ENCODE measurements at regions of chr15 and their contacts with region 1.

Region 1: GRCh38 chr15:64460206-64460734 is at the start of gene ZNF609:
- DNase-seq: peak; percentile 81 to 91 (median 85)
- ATAC-seq: peak; percentile 79
- H3K4me3 ChIP-seq: peak within 1 kb of the TSS; percentile 62 to 70
- H3K4me3 Mint-ChIP-seq: peak within 1 kb of the TSS; percentile 92
- H3K27ac ChIP-seq: peak within 1 kb of the TSS; percentile 32 to 69
- H3K27ac Mint-ChIP-seq: peak within 1 kb of the TSS; percentile 89
- H3K4me1 ChIP-seq: peaks cover 84% of the 10 kb centered on the region
- H3K4me1 Mint-ChIP-seq: peaks cover 84% of the 10 kb centered on the region
- H3K27me3 ChIP-seq: no peaks in the 10 kb centered on the region
- H3K27me3 Mint-ChIP-seq: no peaks in the 10 kb centered on the region
- CTCF ChIP-seq: no peak
- total RNA-seq, gene ZNF609: 40.1 to 40.7 TPM

Region 2: GRCh38 chr15:63600616-63601025 is 859.6 kb before region 1 on chr15:
- CTCF ChIA-PET with region 1: no interaction called
- POLR2A ChIA-PET with region 1: no interaction called
- intact Hi-C with region 1: loop called in 1 of 2 experiments (anchors 5 kb)
- DNase-seq: peak; percentile 79 to 98 (median 90)
- ATAC-seq: peak; percentile 80
- H3K4me3 ChIP-seq: peak overlapping the region; percentile 87 to 96
- H3K4me3 Mint-ChIP-seq: peak overlapping the region; percentile 94
- H3K27ac ChIP-seq: peak overlapping the region; percentile 75 to 87
- H3K27ac Mint-ChIP-seq: peak overlapping the region; percentile 94
- H3K4me1 ChIP-seq: peaks cover 29% of the 10 kb centered on the region
- H3K4me1 Mint-ChIP-seq: peaks cover 56% of the 10 kb centered on the region
- H3K27me3 ChIP-seq: no peaks in the 10 kb centered on the region
- H3K27me3 Mint-ChIP-seq: no peaks in the 10 kb centered on the region
- CTCF ChIP-seq: no peak

Region 3: DNA sequence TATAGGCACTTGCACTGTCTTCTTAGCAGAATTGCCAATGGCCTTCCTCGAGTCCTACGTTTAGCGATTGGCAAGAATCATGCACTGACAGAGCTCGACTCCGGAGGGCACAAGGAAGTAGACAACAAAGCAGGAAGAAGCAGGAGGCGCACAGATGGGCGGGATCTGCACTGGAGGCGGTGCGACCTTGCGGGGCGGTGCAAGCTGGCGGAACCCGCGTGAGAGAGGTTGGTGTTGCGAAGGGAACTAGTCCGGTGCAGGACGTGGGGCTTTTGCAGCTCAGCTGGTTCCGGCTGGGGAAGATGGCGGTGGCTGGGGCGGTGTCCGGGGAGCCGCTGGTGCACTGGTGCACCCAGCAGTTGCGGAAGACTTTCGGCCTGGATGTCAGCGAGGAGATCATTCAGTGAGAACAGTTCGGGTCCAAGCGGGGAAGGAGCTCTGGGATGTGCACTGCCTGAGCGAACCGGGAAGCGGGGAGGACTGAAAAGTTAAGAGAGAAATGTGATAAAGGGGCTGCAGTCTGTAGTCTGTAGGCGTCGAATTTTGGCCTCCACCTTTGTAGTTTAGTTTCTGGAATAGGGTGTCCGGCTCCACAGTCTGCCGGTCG is 72.6 kb before region 1 on chr15 and contains the start of gene TRIP4:
- CTCF ChIA-PET with region 1: no interaction called
- POLR2A ChIA-PET with region 1: no interaction called
- intact Hi-C with region 1: loop called in 1 of 2 experiments (anchors 2 kb)
- DNase-seq: peak; percentile 93 to 98 (median 96)
- ATAC-seq: peak; percentile 99
- H3K4me3 ChIP-seq: peak within 1 kb of the TSS; percentile 86 to 98
- H3K4me3 Mint-ChIP-seq: peak within 1 kb of the TSS; percentile 99
- H3K27ac ChIP-seq: peak within 1 kb of the TSS; percentile 51 to 69
- H3K27ac Mint-ChIP-seq: peak within 1 kb of the TSS; percentile 97
- H3K4me1 ChIP-seq: peaks cover 19% of the 10 kb centered on the region
- H3K4me1 Mint-ChIP-seq: peaks cover 21% of the 10 kb centered on the region
- H3K27me3 ChIP-seq: no peaks in the 10 kb centered on the region
- H3K27me3 Mint-ChIP-seq: no peaks in the 10 kb centered on the region
- CTCF ChIP-seq: no peak
- total RNA-seq, gene TRIP4: 10.7 to 11.2 TPM

Region 4: DNA sequence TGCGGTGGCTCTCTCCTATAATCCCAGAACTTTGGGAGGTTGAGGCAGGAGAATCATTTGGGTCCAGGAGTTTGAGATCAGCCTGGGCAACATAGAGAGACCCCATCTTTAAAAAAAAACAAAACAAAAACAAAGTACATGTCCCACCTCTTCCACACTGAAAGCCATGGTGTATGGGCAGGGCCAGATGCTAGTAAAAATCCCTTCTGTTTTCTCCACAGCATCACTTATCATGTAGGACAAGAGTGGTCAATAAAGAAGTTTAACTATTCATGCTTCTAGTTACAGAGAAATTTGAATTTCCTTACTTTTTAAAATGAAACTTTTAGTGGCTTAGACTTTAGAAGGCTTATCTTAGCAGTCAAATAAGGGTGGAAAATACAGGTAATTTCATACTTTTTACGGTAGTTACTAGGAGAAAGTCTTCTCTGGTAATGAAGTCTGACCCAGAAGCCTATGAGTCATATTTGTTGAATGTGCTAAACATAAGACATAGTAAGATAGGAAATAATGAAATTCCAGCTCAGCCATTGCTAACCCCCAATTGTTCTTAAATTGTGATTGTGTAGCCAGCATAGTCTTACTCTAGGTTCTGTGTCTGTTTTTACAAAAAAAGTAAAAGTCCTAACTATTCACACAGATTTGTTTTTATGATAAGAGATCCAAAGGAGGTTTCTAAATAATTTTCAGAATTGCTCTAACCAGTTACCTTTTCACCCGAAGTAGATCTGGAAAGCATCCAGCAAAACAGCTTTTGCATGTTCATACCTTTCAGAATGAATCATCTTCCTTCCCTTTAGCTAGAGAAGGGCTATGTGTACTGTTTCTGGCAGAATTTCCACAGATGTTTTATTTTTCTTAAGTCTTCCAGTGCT is 16.3 kb before region 1 on chr15:
- CTCF ChIA-PET with region 1: interaction called, 5 read pairs
- POLR2A ChIA-PET with region 1: interaction called, 4 read pairs
- intact Hi-C with region 1: loop called in 1 of 2 experiments (anchors 2 kb)
- DNase-seq: peak in 1 of 9 experiments; percentile 36
- ATAC-seq: peak; percentile 38
- H3K4me3 ChIP-seq: no peak overlapping the region
- H3K4me3 Mint-ChIP-seq: peak overlapping the region; percentile 45
- H3K27ac ChIP-seq: no peak overlapping the region
- H3K27ac Mint-ChIP-seq: peak overlapping the region; percentile 84
- H3K4me1 ChIP-seq: peaks cover 38% of the 10 kb centered on the region
- H3K4me1 Mint-ChIP-seq: peaks cover 49% of the 10 kb centered on the region
- H3K27me3 ChIP-seq: no peaks in the 10 kb centered on the region
- H3K27me3 Mint-ChIP-seq: no peaks in the 10 kb centered on the region
- CTCF ChIP-seq: no peak

Region 5: DNA sequence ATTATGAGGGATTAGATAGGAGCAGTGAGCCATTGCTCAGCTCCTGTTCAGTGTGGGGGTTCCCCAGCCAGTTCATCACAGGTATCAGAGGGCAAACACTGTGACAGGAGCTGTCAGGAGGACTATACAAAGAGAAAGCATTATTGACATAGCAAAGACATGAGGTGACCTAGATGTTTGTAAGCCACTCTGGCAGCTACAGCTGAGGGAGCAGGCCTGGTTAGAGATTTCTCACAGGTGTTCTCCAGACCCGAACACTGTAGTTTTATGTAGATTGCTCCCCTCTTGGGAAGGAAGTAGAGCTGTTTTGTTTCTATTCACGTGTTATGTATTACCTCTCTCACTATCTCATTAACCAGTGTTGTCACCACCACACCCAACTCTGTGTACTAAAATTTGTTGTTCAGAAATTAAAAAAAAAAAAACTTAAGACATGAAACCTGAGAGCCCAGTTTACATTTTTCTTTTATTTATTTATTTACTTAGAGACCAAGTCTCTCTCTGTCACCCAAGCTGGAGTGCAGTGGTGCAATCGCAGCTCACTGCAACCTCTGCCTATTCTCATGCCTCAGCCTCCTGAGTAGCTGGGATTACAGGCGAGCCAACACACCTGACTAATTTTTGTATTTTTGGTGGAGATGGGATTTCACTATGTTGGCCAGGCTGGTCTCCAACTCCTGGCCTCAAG is 191.4 kb after region 1 on chr15:
- CTCF ChIA-PET with region 1: interaction called, 17 read pairs
- POLR2A ChIA-PET with region 1: interaction called, 3 read pairs
- intact Hi-C with region 1: no loop called
- DNase-seq: peak; percentile 5 to 80 (median 42)
- ATAC-seq: peak; percentile 94
- H3K4me3 ChIP-seq: no peak overlapping the region
- H3K4me3 Mint-ChIP-seq: peak overlapping the region; percentile 74
- H3K27ac ChIP-seq: peak overlapping the region; percentile 4 to 53
- H3K27ac Mint-ChIP-seq: peak overlapping the region; percentile 95
- H3K4me1 ChIP-seq: peaks cover 35% of the 10 kb centered on the region
- H3K4me1 Mint-ChIP-seq: peaks cover 50% of the 10 kb centered on the region
- H3K27me3 ChIP-seq: no peaks in the 10 kb centered on the region
- H3K27me3 Mint-ChIP-seq: no peaks in the 10 kb centered on the region
- CTCF ChIP-seq: no peak

Measured in CD8-positive, alpha-beta T cell (primary cell).